Mammary epithelial cell (primary cell): ENCODE measurements at regions of chr19 and their contacts with region 1.

Region 1: GRCh38 chr19:35066691-35067563 is 25.4 kb downstream of the HPN start:
- DNase-seq: peak; percentile 74
- H3K4me3 ChIP-seq: no peak overlapping the region
- H3K27ac ChIP-seq: no peak overlapping the region
- H3K4me1 ChIP-seq: peaks cover 6% of the 10 kb centered on the region
- H3K27me3 ChIP-seq: no peaks in the 10 kb centered on the region
- CTCF ChIP-seq: peak; percentile 93 to 97

Region 2: DNA sequence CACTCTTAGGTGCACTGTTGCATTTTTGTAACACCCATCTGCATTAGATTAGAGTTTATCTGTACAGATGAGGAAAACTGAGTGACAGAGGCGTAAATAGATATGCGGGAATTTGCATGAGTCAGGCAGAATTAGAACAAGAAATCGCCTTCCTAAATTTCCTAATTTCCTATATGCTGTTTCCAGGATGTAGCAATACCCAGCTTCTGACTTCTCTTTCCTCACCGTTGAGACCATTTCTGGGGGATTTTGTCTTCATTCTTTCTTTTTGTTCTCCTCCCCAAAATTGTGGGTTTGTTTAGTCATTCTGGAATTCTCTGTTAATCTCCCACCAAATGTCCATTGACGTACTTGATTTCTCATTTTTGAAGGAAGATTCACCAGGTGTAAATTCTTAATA is 92.3 kb before region 1 on chr19:
- CTCF ChIA-PET with region 1: no interaction called
- dilution Hi-C with region 1: no loop called
- in situ Hi-C with region 1: no loop called
- intact Hi-C with region 1: loop called (anchors 1 kb)
- DNase-seq: no peak
- H3K4me3 ChIP-seq: no peak overlapping the region
- H3K27ac ChIP-seq: no peak overlapping the region
- H3K4me1 ChIP-seq: no peaks in the 10 kb centered on the region
- H3K27me3 ChIP-seq: no peaks in the 10 kb centered on the region
- CTCF ChIP-seq: no peak

Region 3: GRCh38 chr19:35090506-35091237 is 23.7 kb after region 1 on chr19:
- CTCF ChIA-PET with region 1: no interaction called
- dilution Hi-C with region 1: no loop called
- in situ Hi-C with region 1: no loop called
- intact Hi-C with region 1: loop called (anchors 1 kb)
- DNase-seq: peak; percentile 46
- H3K4me3 ChIP-seq: no peak overlapping the region
- H3K27ac ChIP-seq: no peak overlapping the region
- H3K4me1 ChIP-seq: peaks cover 23% of the 10 kb centered on the region
- H3K27me3 ChIP-seq: no peaks in the 10 kb centered on the region
- CTCF ChIP-seq: peak; percentile 43 to 61

Region 4: DNA sequence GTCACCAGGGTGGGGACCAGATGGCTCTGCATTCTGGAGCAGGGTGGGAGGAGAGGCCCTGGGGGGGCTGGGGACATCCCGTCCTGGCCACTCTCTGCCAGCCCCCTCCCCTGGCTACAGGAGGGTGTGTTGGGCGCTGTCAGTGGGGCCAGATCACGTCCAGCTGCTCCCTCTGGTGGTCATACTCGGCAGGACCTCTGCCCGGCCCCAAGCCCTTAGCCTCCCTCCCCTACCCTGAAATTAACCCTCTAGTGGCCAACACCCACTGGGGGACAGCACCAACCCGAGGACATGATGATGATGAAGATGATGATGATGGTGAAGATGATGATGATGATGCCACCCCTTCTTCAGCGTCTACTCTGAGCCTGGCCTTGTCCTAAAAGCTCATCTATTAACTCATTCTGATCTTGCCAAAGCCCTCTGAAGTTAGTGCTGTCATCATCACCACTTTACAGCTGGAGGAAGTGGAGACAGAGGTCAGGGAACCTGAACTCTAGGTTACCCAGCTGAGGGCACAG is 68.5 kb after region 1 on chr19:
- CTCF ChIA-PET with region 1: interaction called, 4 read pairs
- dilution Hi-C with region 1: no loop called
- in situ Hi-C with region 1: loop called in 1 of 2 experiments (anchors 5 kb)
- intact Hi-C with region 1: loop called (anchors 1 kb)
- DNase-seq: no peak
- H3K4me3 ChIP-seq: no peak overlapping the region
- H3K27ac ChIP-seq: no peak overlapping the region
- H3K4me1 ChIP-seq: peaks cover 12% of the 10 kb centered on the region
- H3K27me3 ChIP-seq: no peaks in the 10 kb centered on the region
- CTCF ChIP-seq: peak; percentile 67 to 90

Region 5: DNA sequence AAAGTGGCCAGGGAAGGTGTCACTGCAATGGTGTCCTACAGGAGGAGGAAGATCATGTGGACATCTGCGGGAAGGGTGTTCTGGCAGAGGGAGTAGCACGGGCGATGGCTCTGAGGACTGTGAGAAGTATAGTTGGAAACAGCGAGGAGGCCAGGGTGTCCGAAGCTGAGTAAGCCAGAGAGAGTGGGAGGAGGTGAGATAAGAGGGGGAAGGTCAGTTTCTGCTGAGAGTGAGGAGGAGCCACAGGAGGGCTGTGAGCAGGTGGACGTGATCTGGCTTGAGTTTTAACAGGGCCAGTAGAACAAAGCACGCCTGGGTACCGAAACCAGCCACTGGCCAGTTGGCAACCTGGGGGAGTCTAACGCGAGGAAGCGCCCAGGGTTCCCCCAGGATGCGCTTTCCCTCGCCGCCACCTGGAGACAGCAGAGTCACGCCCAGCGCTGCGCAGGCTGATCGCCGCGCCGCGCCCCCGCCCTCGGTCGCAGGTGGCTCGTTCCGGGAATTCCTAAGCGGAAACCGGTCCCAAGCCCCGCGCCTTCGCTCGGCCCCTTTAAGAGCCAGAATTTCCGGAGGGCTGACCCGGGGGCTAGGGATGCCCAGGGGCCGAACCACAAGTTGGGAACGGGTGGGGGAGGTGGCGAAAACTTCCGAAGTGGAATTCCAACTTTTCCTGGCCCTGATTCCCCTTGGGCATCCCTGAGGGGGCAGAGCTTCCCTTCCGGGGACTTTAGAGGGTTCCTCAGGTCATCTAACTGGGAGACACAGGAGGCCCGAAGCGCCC is 180.8 kb after region 1 on chr19:
- CTCF ChIA-PET with region 1: no interaction called
- dilution Hi-C with region 1: no loop called
- in situ Hi-C with region 1: no loop called
- intact Hi-C with region 1: loop called (anchors 10 kb)
- DNase-seq: peak; percentile 96
- H3K4me3 ChIP-seq: peak overlapping the region; percentile 93 to 99 (median 95)
- H3K27ac ChIP-seq: peak overlapping the region; percentile 93
- H3K4me1 ChIP-seq: peaks cover 18% of the 10 kb centered on the region
- H3K27me3 ChIP-seq: no peaks in the 10 kb centered on the region
- CTCF ChIP-seq: peak; percentile 39 to 78

Region 6: GRCh38 chr19:35468637-35469036 is 401.7 kb after region 1 on chr19:
- CTCF ChIA-PET with region 1: no interaction called
- dilution Hi-C with region 1: no loop called
- in situ Hi-C with region 1: no loop called
- intact Hi-C with region 1: loop called (anchors 10 kb)
- DNase-seq: peak; percentile 24
- H3K4me3 ChIP-seq: no peak overlapping the region
- H3K27ac ChIP-seq: no peak overlapping the region
- H3K4me1 ChIP-seq: no peaks in the 10 kb centered on the region
- H3K27me3 ChIP-seq: no peaks in the 10 kb centered on the region
- CTCF ChIP-seq: peak; percentile 64 to 92